CD8-positive, alpha-beta memory T cell (primary cell): ENCODE measurements at regions of chr5 and their contacts with region 1.

Region 1: DNA sequence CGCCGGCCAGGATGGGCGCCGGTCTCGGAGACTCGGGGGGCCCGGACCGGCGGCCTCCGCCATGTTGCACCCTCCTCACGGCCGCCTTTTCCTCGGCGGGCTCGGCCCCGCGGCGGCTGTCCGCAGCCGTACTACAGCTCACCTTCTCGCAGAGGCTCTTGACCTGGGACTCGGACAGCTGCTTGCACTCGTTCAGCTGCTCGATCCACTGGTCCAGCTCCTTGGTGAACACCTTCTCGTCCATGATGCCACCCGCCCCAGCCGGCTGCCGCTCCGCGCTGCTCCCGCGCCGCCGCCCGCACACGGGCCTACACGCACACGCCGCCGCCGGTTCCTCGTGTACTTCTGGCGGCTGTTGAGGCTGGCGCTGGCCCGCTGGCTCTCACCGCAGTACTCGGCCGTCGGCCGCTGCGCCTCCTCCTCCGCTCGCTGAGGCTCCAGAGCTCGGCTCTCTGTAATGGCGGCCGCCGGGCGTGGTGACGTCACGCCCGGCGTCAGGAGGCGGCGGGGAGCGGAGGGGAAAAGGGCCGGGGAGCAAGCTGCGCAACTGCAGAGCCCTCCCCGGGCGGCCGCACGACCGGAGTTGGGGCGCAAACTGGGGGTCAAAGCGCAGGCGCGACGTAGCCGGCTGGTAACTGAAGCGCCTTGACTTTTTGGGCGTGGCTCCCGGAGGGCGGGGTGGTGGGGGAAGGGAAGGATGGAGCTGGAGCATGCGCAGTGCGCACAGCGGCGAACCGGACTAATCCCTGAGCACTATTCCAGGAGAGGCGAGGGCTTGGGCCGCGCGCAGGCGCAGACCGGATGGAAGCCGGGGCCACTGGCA is at the start of gene PPP2CA:
- DNase-seq: peak; percentile 98 to 100 (median 99)
- H3K4me3 ChIP-seq: peak within 1 kb of the TSS; percentile 85
- H3K4me3 Mint-ChIP-seq: peak within 1 kb of the TSS; percentile 94 to 100 (median 96)
- H3K27ac ChIP-seq: peak within 1 kb of the TSS; percentile 99
- H3K27ac Mint-ChIP-seq: peak within 1 kb of the TSS; percentile 98 to 100 (median 99)
- H3K4me1 ChIP-seq: peaks cover 41% of the 10 kb centered on the region
- H3K4me1 Mint-ChIP-seq: peaks cover 46 to 59% (median 56%) of the 10 kb centered on the region in 3 donors
- H3K27me3 ChIP-seq: no peaks in the 10 kb centered on the region
- H3K27me3 Mint-ChIP-seq: peaks cover 0 to 3% of the 10 kb centered on the region in 2 donors
- total RNA-seq, gene PPP2CA: 189 to 210 TPM

Region 2: DNA sequence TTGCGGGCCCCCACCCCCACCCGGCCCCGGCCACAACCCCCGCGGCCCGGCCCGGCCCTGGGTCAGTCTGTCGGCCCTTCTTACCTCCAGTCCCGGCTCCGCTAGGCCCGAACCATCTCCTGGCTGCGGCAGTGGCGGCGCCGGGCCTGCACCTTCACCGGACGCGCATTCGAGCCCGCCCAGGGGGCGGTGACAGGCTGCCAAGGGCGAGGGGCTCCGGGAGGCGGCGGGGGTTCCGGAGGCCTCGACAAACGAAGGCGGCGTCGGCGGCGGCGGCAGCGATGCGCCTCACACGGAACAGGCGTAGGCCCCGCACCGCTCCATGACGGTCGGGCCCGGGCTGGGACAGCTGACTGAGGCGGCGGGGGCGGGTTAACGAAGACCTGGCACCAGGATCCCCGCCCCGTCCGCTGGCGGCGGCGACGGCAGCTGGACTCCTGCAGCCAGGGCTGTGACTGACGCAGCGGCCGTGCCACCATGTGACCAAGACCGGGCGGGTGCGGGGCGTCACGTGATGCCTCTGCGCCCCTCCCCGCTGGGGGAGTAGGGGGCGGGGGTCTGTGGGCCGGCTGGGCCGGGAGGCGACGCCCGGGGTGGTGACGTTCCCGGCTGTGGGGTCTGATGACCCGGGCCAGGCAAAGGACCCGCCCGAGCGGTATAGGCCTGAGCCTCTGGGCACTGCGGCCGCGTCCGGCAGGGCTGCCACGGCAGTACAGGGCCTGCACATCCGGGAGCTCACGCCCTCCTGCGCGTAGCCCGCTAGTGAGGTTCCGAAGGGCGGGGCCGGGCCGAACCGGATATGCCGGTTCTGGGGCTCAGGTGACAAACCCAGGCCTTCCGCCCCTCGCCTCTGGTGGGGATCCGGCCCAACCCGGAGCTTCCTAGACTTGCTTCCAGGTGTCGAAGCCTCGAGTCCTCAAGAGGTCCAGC is 1262.4 kb before region 1 on chr5 and contains the start of gene AFF4:
- CTCF ChIA-PET with region 1: no interaction called
- POLR2A ChIA-PET with region 1: interaction called, 10 read pairs
- DNase-seq: peak; percentile 79 to 92 (median 88)
- H3K4me3 ChIP-seq: peak within 1 kb of the TSS; percentile 85
- H3K4me3 Mint-ChIP-seq: peak within 1 kb of the TSS; percentile 93 to 98 (median 95)
- H3K27ac ChIP-seq: peak within 1 kb of the TSS; percentile 90
- H3K27ac Mint-ChIP-seq: peak within 1 kb of the TSS; percentile 97 to 100 (median 98)
- H3K4me1 ChIP-seq: peaks cover 42% of the 10 kb centered on the region
- H3K4me1 Mint-ChIP-seq: peaks cover 35 to 49% (median 48%) of the 10 kb centered on the region in 3 donors
- H3K27me3 ChIP-seq: no peaks in the 10 kb centered on the region
- H3K27me3 Mint-ChIP-seq: no peaks in the 10 kb centered on the region
- total RNA-seq, gene AFF4: 26.3 to 28.8 TPM

Region 3: GRCh38 chr5:133996683-133997252 is 229.1 kb before region 1 on chr5:
- CTCF ChIA-PET with region 1: no interaction called
- POLR2A ChIA-PET with region 1: no interaction called
- DNase-seq: no peak
- H3K4me3 ChIP-seq: no peak overlapping the region
- H3K4me3 Mint-ChIP-seq: no peak overlapping the region
- H3K27ac ChIP-seq: no peak overlapping the region
- H3K27ac Mint-ChIP-seq: peak overlapping the region in 4 of 8 donors; percentile 52 to 74 (median 72)
- H3K4me1 ChIP-seq: peaks cover 20% of the 10 kb centered on the region
- H3K4me1 Mint-ChIP-seq: peaks cover 58 to 84% (median 77%) of the 10 kb centered on the region in 3 donors
- H3K27me3 ChIP-seq: no peaks in the 10 kb centered on the region
- H3K27me3 Mint-ChIP-seq: no peaks in the 10 kb centered on the region

Region 4: DNA sequence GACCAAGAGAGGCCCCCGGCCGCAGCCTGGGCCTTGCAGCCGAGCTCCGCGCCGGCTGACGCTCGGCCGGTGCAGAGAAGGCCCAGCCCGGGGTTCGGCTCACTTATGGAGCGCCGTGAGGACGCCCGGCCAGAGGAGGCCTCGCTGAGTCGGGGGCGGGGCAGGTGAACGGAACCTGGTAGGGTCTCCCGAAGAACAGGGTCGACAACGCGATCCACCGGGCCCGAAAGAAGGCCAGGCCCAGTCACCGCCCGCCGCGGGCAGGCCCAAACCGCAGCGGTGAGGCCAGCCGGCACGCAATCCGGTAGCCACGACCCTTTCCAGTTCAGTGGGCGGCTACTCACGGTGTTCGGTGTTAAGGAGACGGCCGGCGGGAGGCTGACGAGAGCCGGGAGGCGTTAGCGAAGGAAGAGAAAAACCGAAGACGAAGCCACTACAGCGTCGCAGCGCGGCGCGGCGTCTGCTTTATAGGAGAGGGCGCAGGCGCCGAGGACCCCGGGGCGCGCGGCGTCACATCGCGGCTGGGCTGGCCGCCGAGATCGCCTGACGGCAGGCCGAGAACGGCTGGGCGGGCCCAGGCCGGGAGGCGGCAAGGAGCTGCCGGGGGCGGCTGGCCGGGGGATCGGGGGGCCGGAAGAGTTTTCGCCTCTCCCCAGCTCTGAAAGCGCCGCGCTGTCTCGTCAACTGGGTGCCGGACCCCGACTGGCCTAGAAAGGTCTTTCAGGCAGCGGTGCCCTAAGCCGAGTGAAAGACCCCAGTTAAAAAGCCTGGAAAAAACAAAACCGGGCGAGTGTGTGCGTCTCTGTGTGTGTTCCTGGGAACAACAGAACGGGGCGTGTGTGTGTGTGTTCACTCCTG is 49.1 kb before region 1 on chr5 and contains the start of gene SKP1:
- CTCF ChIA-PET with region 1: interaction called, 31 read pairs
- POLR2A ChIA-PET with region 1: interaction called, 41 read pairs
- DNase-seq: peak; percentile 75 to 91 (median 88)
- H3K4me3 ChIP-seq: peak within 1 kb of the TSS; percentile 86
- H3K4me3 Mint-ChIP-seq: peak within 1 kb of the TSS; percentile 97 to 100 (median 98)
- H3K27ac ChIP-seq: peak within 1 kb of the TSS; percentile 97
- H3K27ac Mint-ChIP-seq: peak within 1 kb of the TSS; percentile 97 to 99 (median 98)
- H3K4me1 ChIP-seq: peaks cover 22% of the 10 kb centered on the region
- H3K4me1 Mint-ChIP-seq: peaks cover 28 to 41% (median 38%) of the 10 kb centered on the region in 3 donors
- H3K27me3 ChIP-seq: no peaks in the 10 kb centered on the region
- H3K27me3 Mint-ChIP-seq: peaks cover 0 to 1% of the 10 kb centered on the region in 2 donors
- total RNA-seq, gene SKP1: 264 to 280 TPM

Region 5: GRCh38 chr5:134209477-134210240 is 16.2 kb before region 1 on chr5:
- CTCF ChIA-PET with region 1: interaction called, 7 read pairs
- POLR2A ChIA-PET with region 1: interaction called, 11 read pairs
- DNase-seq: no peak
- H3K4me3 ChIP-seq: no peak overlapping the region
- H3K4me3 Mint-ChIP-seq: peak overlapping the region in 6 of 7 donors; percentile 7 to 74 (median 38)
- H3K27ac ChIP-seq: no peak overlapping the region
- H3K27ac Mint-ChIP-seq: peak overlapping the region in 5 of 8 donors; percentile 10 to 61 (median 19)
- H3K4me1 ChIP-seq: peaks cover 55% of the 10 kb centered on the region
- H3K4me1 Mint-ChIP-seq: peaks cover 69 to 87% (median 81%) of the 10 kb centered on the region in 3 donors
- H3K27me3 ChIP-seq: no peaks in the 10 kb centered on the region
- H3K27me3 Mint-ChIP-seq: peaks cover 0 to 4% of the 10 kb centered on the region in 2 donors

Region 6: DNA sequence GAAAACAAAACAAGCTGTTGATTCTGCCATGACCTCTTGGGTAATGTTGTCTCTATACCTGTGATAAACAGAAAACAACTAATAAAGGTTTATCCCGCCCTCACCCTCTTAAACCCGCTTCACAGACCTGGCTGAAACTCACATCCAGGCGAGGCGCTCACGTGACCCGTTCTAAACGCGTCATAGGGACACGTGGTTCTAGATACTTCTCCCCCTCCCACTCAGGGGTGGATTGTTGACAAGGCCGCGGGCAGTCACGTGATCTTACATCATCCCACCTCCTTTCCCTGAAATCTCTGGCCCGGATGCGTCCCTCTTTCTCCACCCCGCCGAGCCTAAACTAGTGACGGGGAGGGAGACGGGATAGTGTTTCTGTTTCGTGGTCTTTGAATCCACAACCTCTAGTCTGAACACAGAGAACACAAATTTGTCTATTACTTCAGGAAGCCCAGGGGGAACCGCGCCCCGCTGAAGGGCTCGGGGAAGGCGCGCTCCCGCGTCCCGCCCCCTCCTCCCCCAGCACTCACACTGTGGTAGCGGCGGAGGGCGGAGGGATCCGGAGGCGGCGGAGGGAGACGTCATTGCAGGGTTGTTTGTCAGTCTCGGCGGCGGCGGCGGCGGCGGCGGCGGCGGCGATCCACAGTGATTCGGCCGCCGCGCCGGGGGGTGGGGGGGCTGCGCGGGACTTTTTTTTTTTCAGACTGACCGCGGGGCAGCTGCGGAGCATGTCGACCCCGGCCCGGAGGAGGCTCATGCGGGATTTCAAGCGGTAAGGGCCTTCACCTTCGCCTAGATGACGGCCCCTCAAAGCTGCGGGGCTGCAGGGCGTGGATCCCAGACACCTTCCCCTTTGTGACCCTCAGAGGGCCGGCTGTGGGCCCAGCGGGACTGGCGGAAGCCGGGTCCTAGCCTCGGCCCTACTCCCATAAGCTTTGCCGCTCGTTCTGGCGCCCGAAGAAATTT is 145.3 kb after region 1 on chr5 and contains the start of gene UBE2B:
- CTCF ChIA-PET with region 1: interaction called, 5 read pairs
- POLR2A ChIA-PET with region 1: interaction called, 18 read pairs
- DNase-seq: peak; percentile 94 to 98 (median 97)
- H3K4me3 ChIP-seq: peak within 1 kb of the TSS; percentile 66
- H3K4me3 Mint-ChIP-seq: peak within 1 kb of the TSS; percentile 88 to 99 (median 98)
- H3K27ac ChIP-seq: peak within 1 kb of the TSS; percentile 100
- H3K27ac Mint-ChIP-seq: peak within 1 kb of the TSS; percentile 97 to 100 (median 100)
- H3K4me1 ChIP-seq: peaks cover 60% of the 10 kb centered on the region
- H3K4me1 Mint-ChIP-seq: peaks cover 46 to 70% (median 66%) of the 10 kb centered on the region in 3 donors
- H3K27me3 ChIP-seq: no peaks in the 10 kb centered on the region
- H3K27me3 Mint-ChIP-seq: peaks cover 0 to 10% of the 10 kb centered on the region in 2 donors
- total RNA-seq, gene UBE2B: 105 TPM